ENCODE measurements at regions of chr19 and their contacts with region 1.

Region 1: GRCh38 chr19:4272894-4273293 is 6.2 kb upstream of the SHD start:
- DNase-seq: no peak
- H3K4me3 ChIP-seq: no peak overlapping the region
- H3K27ac ChIP-seq: no peak overlapping the region
- H3K4me1 ChIP-seq: no peaks in the 10 kb centered on the region
- H3K27me3 ChIP-seq: no peaks in the 10 kb centered on the region
- CTCF ChIP-seq: no peak

Region 2: GRCh38 chr19:4304530-4305252 is 31.8 kb after region 1 on chr19 and contains the start of gene FSD1:
- intact Hi-C with region 1: loop called (anchors 2 kb)
- DNase-seq: no peak
- H3K4me3 ChIP-seq: peak within 1 kb of the TSS; percentile 21 to 50
- H3K27ac ChIP-seq: no peak within 1 kb of the TSS
- H3K4me1 ChIP-seq: no peaks in the 10 kb centered on the region
- H3K27me3 ChIP-seq: no peaks in the 10 kb centered on the region
- CTCF ChIP-seq: no peak
- total RNA-seq, gene FSD1: not detected